A549 (cell line): ENCODE measurements at regions of chr17 and their contacts with region 1.

Region 1: DNA sequence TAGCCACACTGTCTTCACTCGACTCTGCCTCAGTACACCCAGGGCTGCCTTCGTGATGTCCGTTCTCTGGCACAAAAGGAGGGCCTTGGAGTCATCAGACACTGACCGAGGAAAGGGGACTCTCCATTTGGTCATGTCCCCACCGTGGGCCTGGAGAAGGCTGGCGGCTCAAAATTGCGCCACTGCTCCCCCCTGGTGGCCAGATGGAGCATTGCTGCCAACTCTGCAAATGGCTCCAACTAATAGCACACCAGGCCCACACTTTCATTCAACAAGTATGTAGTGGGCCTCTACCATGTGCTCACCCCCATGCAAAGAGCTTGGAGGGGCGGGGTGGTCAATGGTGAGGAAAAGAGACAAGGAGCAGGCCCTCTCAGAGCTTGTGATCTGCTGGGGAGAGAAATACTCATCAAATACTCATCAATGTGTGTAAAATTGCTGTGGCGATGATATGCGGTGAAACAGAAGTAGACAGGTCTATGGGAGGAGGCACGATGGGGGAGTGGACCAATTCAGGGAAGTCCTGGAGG is 5.2 kb upstream of the GRIN2C start:
- DNase-seq: peak; percentile 78 to 85
- ATAC-seq: peak; percentile 49 to 74
- H3K4me3 ChIP-seq: no peak overlapping the region
- H3K27ac ChIP-seq: no peak overlapping the region
- H3K4me1 ChIP-seq: peaks cover 38% of the 10 kb centered on the region
- CTCF ChIP-seq: peak; percentile 77
- EP300 ChIP-seq: no peak
- POLR2A ChIP-seq: no peak
- RAD21 ChIP-seq: peak; percentile 76 to 85

Region 2: GRCh38 chr17:74742153-74742515 is 122.8 kb before region 1 on chr17:
- CTCF ChIA-PET with region 1: interaction called, 75 read pairs
- POLR2A ChIA-PET with region 1: interaction called, 3 read pairs
- DNase-seq: no peak
- ATAC-seq: no peak
- H3K4me3 ChIP-seq: no peak overlapping the region
- H3K27ac ChIP-seq: peak overlapping the region in 1 of 2 experiments; percentile 12; a peak in 1 of 6 replicates
- H3K4me1 ChIP-seq: peaks cover 29% of the 10 kb centered on the region
- CTCF ChIP-seq: no peak
- EP300 ChIP-seq: no peak
- POLR2A ChIP-seq: no peak
- RAD21 ChIP-seq: no peak

Region 3: DNA sequence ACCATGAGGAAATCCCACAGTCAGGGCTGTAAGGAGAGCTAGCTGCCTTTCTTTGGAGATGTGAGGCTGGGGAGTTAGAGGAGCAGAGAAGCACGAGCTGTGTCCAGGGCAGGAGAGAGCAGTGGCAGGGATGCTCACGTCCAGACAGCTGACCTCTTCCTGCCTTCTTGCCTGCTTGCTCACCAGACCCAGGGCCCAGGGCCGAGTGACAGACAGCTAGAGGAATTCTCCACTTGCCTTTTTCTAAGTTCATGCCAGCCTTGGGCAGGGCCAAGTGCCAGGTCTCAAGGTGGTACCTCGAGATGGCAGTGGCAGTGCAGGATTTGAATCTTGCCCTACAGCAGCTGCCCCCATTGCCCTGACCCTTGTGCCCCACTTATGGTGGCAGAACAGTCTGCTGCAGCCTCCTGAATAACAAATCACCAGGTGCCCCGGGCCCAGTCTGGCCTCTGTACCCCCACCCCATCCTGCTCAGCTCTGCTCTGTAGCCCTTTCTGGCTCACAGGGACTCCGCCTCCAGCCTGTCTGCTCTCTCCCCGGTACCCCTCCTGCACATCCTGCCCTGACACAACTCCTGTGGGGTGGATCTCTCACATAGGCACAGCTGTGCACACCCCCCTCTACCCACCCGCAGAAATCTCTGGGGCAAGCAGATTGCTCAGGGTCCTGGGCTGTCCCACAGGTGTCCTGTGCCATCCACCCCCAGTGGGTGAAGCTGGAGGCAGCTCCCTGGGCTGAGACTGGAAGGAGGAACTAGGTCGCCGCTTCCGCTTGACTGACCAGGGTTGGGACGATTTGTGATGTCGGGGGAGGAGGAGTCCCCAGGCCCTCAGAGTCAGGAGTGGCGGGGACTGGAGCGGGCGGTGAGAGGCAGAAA is 31.2 kb before region 1 on chr17:
- CTCF ChIA-PET with region 1: interaction called, 851 read pairs
- POLR2A ChIA-PET with region 1: no interaction called
- DNase-seq: no peak
- ATAC-seq: peak; percentile 45 to 62; a peak in 4 of 6 replicates
- H3K4me3 ChIP-seq: no peak overlapping the region
- H3K27ac ChIP-seq: no peak overlapping the region
- H3K4me1 ChIP-seq: no peaks in the 10 kb centered on the region; the same call in 2 of the 3 replicates
- CTCF ChIP-seq: no peak
- EP300 ChIP-seq: no peak
- POLR2A ChIP-seq: no peak
- RAD21 ChIP-seq: no peak

Region 4: DNA sequence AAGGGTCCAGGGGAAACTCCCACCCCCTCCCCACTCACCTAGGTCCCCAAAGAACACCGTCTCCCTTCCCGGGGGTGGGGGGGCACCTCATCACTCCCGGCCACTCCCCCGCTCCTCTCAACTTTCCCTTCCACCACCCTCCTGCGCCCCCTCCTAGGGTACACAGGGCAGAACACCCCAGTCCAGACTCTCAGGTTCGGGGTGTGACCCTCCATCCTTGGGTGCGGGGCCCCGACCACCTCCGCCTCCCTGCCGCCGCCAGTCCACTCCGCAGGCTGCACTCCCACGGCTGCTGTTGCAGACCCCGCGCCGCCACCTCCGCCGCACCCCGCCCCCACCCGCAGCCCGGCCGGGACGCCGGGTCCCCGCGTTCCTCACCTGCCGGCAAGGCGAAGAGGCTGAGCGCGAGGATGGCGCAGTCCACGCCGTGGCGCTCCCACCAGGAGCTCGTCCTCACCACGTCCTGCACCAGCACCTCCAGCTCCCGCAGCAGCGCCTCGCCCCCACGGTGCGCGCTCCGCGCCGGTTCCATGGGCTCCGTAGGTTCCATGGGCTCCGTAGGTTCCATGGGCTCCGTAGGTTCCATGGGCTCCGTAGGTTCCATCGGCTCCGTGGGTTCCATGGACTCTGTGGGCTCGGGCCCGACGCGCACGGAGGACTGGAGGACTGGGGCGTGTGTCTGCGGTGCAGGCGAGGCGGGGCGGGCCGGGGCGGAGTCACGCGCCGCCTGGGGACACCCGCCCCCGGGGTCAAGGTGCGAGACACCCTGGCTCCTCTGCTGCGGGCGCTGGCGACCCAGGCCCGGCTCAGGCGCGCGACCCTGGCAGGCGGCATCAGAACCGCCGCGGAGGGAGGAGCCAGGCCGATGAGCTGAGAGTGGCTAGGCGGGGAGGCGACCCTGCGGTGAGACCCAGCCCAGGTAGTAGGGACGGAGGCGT is 28.3 kb after region 1 on chr17 and contains the start of gene FADS6:
- CTCF ChIA-PET with region 1: interaction called, 13 read pairs
- POLR2A ChIA-PET with region 1: interaction called, 7 read pairs
- DNase-seq: no peak
- ATAC-seq: peak; percentile 32 to 65; a peak in 4 of 6 replicates
- H3K4me3 ChIP-seq: peak within 1 kb of the TSS; percentile 40
- H3K27ac ChIP-seq: peak within 1 kb of the TSS; percentile 30 to 59; a peak in 4 of 6 replicates
- H3K4me1 ChIP-seq: peaks cover 4% of the 10 kb centered on the region; the same call in 1 of the 3 replicates
- CTCF ChIP-seq: no peak
- EP300 ChIP-seq: no peak
- POLR2A ChIP-seq: no peak
- RAD21 ChIP-seq: no peak
- polyA plus RNA-seq, gene FADS6: not detected in 2 replicates